Activated naive CD4-positive, alpha-beta T cell treated with anti-CD3 and anti-CD28 coated beads for 36 hours (primary cell): ENCODE measurements at regions of chr5 and their contacts with region 1.

Region 1: GRCh38 chr5:93582677-93583438 is at the start of gene NR2F1:
- DNase-seq: no peak
- H3K4me3 Mint-ChIP-seq: peak within 1 kb of the TSS; percentile 54
- H3K27ac Mint-ChIP-seq: no peak within 1 kb of the TSS
- H3K4me1 Mint-ChIP-seq: peaks cover 28% of the 10 kb centered on the region
- H3K27me3 Mint-ChIP-seq: peaks cover 46% of the 10 kb centered on the region
- total RNA-seq, gene NR2F1: not detected

Region 2: DNA sequence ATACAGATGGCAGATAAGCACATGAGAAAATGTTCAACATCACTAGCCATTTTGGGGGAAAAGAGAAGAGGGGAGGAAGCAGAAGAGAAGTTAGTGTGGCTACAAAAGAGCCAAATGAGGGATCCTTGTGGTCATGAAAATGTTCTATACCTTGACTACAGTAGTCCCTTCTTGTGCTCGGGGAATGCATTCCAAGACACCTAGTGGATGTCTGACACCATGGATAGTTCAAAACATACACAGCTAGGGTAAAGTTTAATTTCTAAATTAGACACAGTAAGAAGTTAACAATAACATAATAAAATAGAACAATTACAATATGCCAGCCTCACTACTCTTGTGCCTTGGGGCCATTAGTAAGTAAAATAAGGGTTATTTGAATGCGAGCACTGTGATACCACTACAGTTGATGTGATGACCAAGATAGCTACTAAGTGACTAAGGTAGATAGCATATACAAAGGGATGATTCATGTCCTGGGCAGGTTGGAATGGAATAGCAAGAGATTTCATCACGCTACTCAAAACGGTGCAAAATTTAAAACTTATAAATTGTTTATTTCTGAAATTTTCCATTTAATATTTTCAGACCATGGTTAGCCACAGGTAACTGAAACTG is 345.9 kb before region 1 on chr5:
- CTCF ChIA-PET with region 1: no interaction called
- intact Hi-C with region 1: no loop called
- DNase-seq: no peak
- H3K4me3 Mint-ChIP-seq: no peak overlapping the region
- H3K27ac Mint-ChIP-seq: no peak overlapping the region
- H3K4me1 Mint-ChIP-seq: no peaks in the 10 kb centered on the region
- H3K27me3 Mint-ChIP-seq: no peaks in the 10 kb centered on the region

Region 3: DNA sequence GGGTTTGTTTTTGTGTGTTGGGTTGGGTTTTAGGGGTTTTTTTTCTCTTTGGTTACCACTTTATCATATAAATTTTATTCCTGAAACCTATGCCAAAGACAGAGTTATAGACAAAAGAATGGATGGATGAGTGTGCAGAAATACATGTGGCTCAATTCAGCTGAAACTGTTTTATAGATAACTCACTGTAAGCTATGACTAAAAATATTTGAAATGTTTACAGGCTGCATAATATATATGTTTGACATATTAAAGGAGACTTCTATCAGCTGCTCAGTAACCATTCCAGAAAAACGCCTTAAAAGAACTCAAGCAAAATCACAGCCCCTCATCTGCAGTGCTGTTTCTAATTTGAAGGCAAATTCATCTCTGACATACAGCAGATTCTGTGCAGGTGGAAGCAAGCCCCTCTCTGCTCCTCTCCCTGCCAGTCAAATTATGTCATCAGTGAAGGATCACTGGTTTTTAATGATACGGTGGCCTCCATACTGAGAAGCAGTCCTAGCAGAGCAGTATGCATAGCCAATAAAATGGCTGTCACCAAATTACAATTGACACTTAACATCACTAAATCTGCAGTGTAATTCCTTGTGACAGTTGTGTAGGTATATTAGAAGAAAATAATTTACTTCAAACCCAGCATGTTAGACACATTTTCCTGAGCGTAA is 303.4 kb before region 1 on chr5:
- CTCF ChIA-PET with region 1: no interaction called
- intact Hi-C with region 1: no loop called
- DNase-seq: no peak
- H3K4me3 Mint-ChIP-seq: no peak overlapping the region
- H3K27ac Mint-ChIP-seq: no peak overlapping the region
- H3K4me1 Mint-ChIP-seq: no peaks in the 10 kb centered on the region
- H3K27me3 Mint-ChIP-seq: no peaks in the 10 kb centered on the region

Region 4: DNA sequence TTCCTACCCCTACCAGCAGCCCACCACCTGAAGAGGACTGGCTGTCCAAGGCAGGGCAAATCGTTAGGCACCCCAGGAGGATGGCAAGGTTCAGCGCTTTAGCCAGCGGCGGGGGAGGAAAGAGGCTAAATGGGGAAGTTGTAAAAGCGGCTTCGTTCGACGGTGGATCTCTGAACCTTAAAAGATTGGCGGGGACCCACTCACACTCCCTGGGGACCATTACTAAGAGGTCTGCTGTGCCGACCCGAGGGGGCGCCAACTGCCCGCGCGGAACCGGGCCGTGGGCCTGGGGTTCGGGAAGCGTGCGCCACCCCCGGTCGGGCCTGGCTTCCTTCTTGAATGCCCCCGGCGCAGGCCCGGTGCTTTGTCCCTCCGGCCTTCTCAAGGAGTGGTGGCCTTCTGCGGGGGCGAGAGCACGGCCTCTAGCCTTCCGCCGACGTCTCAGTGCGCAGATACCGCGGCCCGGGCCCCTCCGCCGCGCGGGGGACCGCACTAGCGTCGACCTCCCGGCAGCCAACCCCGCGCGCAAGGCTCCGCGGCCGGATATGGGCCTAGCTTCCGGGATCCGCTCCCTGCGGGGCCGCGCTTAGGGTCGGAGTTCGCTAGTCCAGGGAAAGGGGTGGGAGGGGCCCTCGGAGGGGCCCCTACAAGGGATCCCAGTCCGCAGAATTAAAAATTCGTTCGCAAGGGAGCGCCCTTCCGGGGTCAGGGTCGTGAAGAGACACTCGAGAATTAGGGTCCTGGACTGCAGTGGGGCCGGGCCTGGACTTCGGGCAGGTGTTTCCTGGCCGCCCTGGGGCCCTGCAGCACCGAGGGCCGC is 12.4 kb before region 1 on chr5:
- CTCF ChIA-PET with region 1: interaction called, 8 read pairs
- intact Hi-C with region 1: loop called (anchors 1 kb)
- DNase-seq: no peak
- H3K4me3 Mint-ChIP-seq: peak overlapping the region; percentile 12
- H3K27ac Mint-ChIP-seq: no peak overlapping the region
- H3K4me1 Mint-ChIP-seq: peaks cover 23% of the 10 kb centered on the region
- H3K27me3 Mint-ChIP-seq: peaks cover 71% of the 10 kb centered on the region

Region 5: GRCh38 chr5:93620487-93621326 is 37.8 kb after region 1 on chr5:
- CTCF ChIA-PET with region 1: interaction called, 5 read pairs
- intact Hi-C with region 1: loop called (anchors 5 kb)
- DNase-seq: peak; percentile 64
- H3K4me3 Mint-ChIP-seq: peak overlapping the region; percentile 76
- H3K27ac Mint-ChIP-seq: no peak overlapping the region
- H3K4me1 Mint-ChIP-seq: peaks cover 24% of the 10 kb centered on the region
- H3K27me3 Mint-ChIP-seq: peaks cover 43% of the 10 kb centered on the region

Region 6: GRCh38 chr5:93915142-93915553 is 332.3 kb after region 1 on chr5:
- CTCF ChIA-PET with region 1: no interaction called
- intact Hi-C with region 1: loop called (anchors 1 kb)
- DNase-seq: no peak
- H3K4me3 Mint-ChIP-seq: no peak overlapping the region
- H3K27ac Mint-ChIP-seq: no peak overlapping the region
- H3K4me1 Mint-ChIP-seq: no peaks in the 10 kb centered on the region
- H3K27me3 Mint-ChIP-seq: no peaks in the 10 kb centered on the region

Region 7: GRCh38 chr5:94524841-94525697 is 942.2 kb after region 1 on chr5:
- CTCF ChIA-PET with region 1: no interaction called
- intact Hi-C with region 1: loop called (anchors 10 kb)
- DNase-seq: peak; percentile 22
- H3K4me3 Mint-ChIP-seq: no peak overlapping the region
- H3K27ac Mint-ChIP-seq: no peak overlapping the region
- H3K4me1 Mint-ChIP-seq: no peaks in the 10 kb centered on the region
- H3K27me3 Mint-ChIP-seq: no peaks in the 10 kb centered on the region

Region 8: GRCh38 chr5:94740286-94740685 is 1157.4 kb after region 1 on chr5:
- CTCF ChIA-PET with region 1: no interaction called
- intact Hi-C with region 1: loop called (anchors 1 kb)
- DNase-seq: no peak
- H3K4me3 Mint-ChIP-seq: no peak overlapping the region
- H3K27ac Mint-ChIP-seq: no peak overlapping the region
- H3K4me1 Mint-ChIP-seq: no peaks in the 10 kb centered on the region
- H3K27me3 Mint-ChIP-seq: peaks cover 5% of the 10 kb centered on the region